ENCODE measurements at regions of chr2 and their contacts with region 1.

Region 1: GRCh38 chr2:119311356-119311755 is 55.3 kb downstream of the C2orf76 start:
- DNase-seq: peak in 2 of 4 experiments; percentile 20 to 23
- ATAC-seq: peak; percentile 75
- H3K4me3 ChIP-seq: no peak overlapping the region
- H3K27ac ChIP-seq: no peak overlapping the region
- H3K4me1 ChIP-seq: no peaks in the 10 kb centered on the region
- H3K27me3 ChIP-seq: peaks cover 5 to 8% of the 10 kb centered on the region in 2 experiments; a peak in 1 of 5 replicates
- CTCF ChIP-seq: peak in 2 of 3 experiments; percentile 32 to 53; a peak in 3 of 6 replicates
- EP300 ChIP-seq: no peak
- POLR2A ChIP-seq: no peak
- RAD21 ChIP-seq: peak; percentile 44 to 61

Region 2: GRCh38 chr2:119387381-119388129 is 76.2 kb after region 1 on chr2:
- CTCF ChIA-PET with region 1: no interaction called
- POLR2A ChIA-PET with region 1: no interaction called
- in situ Hi-C with region 1: no loop called
- intact Hi-C with region 1: loop called (anchors 5 kb)
- DNase-seq: peak; percentile 22 to 65 (median 30)
- ATAC-seq: peak; percentile 67
- H3K4me3 ChIP-seq: no peak overlapping the region
- H3K27ac ChIP-seq: no peak overlapping the region
- H3K4me1 ChIP-seq: peaks cover 0 to 8% of the 10 kb centered on the region in 2 experiments; a peak in 4 of 5 replicates
- H3K27me3 ChIP-seq: peaks cover 1 to 14% of the 10 kb centered on the region in 2 experiments; a peak in 3 of 5 replicates
- CTCF ChIP-seq: peak in 2 of 3 experiments; percentile 15 to 33; a peak in 1 of 6 replicates
- EP300 ChIP-seq: no peak
- POLR2A ChIP-seq: no peak
- RAD21 ChIP-seq: peak in 1 of 2 experiments; percentile 22; a peak in 1 of 4 replicates

Region 3: GRCh38 chr2:119407430-119408220 is 96.3 kb after region 1 on chr2:
- CTCF ChIA-PET with region 1: no interaction called
- POLR2A ChIA-PET with region 1: no interaction called
- in situ Hi-C with region 1: no loop called
- intact Hi-C with region 1: loop called (anchors 5 kb)
- DNase-seq: peak; percentile 71 to 78 (median 74)
- ATAC-seq: peak; percentile 89
- H3K4me3 ChIP-seq: no peak overlapping the region
- H3K27ac ChIP-seq: no peak overlapping the region
- H3K4me1 ChIP-seq: no peaks in the 10 kb centered on the region; a peak in 1 of 5 replicates
- H3K27me3 ChIP-seq: peaks cover 0 to 27% of the 10 kb centered on the region in 2 experiments; a peak in 2 of 5 replicates
- CTCF ChIP-seq: peak; percentile 78 to 93 (median 79)
- EP300 ChIP-seq: no peak
- POLR2A ChIP-seq: no peak
- RAD21 ChIP-seq: peak; percentile 95

Region 4: DNA sequence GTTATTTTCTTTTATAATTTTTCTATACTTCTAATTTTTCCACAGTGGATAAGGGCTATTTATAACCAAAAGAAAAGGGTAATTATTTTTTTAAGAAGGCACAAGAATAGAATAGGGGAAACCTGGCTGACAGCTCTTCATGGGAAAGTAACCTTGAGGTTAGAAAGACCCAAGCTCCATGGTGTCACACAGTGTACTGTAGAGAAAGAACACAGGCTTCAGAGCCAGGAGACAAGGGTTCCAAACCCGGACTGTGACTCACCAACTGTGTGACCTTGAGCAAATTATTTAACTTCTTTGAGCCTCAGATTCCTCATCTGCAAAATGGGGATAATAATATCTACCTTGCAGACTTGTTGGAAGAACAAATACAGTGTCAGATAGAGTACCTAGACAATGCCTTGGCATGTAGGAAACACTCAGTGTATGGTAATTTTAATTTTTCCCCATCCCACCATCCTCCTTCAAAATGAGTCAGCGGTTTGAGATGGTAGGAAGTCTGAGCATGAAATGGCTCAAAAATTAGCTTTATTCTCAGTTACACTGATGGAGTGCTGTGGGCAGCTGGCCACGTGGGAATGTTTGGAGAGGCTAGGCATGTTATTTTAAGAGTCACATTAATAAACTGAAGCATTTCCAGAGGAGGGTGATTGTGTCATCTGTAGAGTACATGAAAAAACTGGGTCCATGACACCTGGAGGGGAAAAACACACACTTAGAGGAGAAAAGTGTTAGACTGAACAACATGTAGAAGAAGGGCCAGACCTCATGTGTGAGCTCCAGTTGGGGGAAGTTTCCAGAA is 157.0 kb after region 1 on chr2:
- CTCF ChIA-PET with region 1: no interaction called
- POLR2A ChIA-PET with region 1: no interaction called
- in situ Hi-C with region 1: loop called (anchors 5 kb)
- intact Hi-C with region 1: no loop called
- DNase-seq: no peak
- ATAC-seq: no peak
- H3K4me3 ChIP-seq: no peak overlapping the region
- H3K27ac ChIP-seq: no peak overlapping the region
- H3K4me1 ChIP-seq: no peaks in the 10 kb centered on the region
- H3K27me3 ChIP-seq: peaks cover 7 to 28% of the 10 kb centered on the region in 2 experiments; a peak in 4 of 5 replicates
- CTCF ChIP-seq: no peak
- EP300 ChIP-seq: no peak
- POLR2A ChIP-seq: no peak
- RAD21 ChIP-seq: no peak

Region 5: DNA sequence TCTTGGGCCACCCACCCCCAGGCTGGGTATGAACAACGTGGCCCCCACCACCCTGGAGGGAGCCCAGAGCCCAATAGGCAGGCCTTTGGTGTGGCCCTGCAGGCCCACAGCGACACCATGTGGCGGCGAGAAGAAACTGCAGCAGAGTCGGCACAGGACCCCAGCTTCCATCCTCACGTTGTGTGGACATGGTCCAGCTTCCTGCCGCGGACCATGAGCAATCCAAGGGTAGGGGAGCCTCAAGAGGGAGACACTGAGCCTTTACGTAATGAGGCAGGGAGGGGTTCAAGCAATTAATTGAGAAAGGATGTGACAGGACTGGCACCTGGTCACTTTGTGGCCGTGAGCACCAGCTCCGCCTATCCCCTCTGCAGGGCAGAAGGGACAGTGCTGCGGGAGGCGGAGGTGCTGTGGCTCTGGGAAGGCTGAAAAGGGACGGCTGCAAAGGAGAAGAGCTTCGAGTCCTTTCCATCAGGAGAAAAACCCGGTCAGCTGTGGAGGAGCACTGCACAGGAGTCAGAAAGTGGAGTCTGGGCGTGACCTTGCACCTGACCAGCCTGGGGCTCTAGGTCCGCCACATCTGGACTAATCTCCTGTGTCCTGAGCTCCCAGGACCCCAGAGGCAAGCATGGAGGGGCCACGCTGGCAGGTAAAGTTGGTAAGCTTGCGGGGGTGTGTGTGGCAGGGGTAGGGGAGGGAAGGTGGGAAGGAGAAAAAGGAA is 165.1 kb after region 1 on chr2:
- CTCF ChIA-PET with region 1: interaction called, 8 read pairs
- POLR2A ChIA-PET with region 1: no interaction called
- in situ Hi-C with region 1: loop called (anchors 5 kb)
- intact Hi-C with region 1: loop called (anchors 1 kb)
- DNase-seq: peak; percentile 72 to 87 (median 82)
- ATAC-seq: peak; percentile 96
- H3K4me3 ChIP-seq: no peak overlapping the region
- H3K27ac ChIP-seq: no peak overlapping the region
- H3K4me1 ChIP-seq: peaks cover 4 to 5% of the 10 kb centered on the region in 2 experiments; a peak in 3 of 5 replicates
- H3K27me3 ChIP-seq: peaks cover 6 to 62% of the 10 kb centered on the region in 2 experiments; a peak in 4 of 5 replicates
- CTCF ChIP-seq: peak; percentile 90 to 94 (median 93)
- EP300 ChIP-seq: no peak
- POLR2A ChIP-seq: no peak
- RAD21 ChIP-seq: peak; percentile 96

Measured in K562 (cell line).